HEK293T (cell line): ENCODE measurements at regions of chr6 and their contacts with region 1.

Region 1: DNA sequence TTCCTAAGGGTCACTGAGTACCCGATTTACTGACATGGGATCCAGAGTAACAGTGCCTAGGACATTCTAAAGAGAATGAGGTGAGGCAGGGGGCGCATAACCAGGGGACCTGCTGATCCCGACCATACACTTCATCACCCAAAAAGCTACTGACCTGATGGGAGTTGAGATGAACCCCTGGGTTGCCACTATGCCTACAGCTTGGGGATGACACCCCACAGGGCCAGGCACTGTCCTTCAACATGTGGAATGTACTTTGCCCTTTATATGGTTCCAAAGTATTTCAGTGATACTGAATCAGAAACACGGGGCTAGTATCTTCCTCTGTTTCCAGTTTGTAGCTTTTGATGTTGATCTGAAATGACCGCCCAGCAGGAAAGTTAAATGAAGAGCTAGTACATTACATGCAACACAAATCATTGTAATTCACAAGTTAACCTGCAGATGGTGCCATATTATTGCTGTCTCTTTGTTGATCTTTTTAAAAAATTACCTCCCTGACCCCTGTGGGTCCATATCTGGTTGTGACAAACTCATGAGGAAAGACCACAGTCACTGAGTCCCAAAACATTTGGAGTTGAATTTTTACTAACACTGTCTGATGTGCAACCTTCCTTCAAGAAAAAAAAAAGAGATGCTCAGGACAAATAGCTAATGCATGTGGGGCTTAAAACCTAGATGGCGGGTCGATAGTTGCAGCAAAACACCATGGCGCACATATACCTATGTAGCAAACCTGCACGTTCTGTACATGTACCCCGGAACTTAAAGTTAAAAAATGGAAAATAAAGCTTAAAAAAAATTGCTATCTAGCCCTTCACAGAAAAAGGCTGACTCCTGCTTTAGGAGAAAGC is 42.7 kb upstream of the GCNT2 start:
- DNase-seq: peak; percentile 51

Region 2: GRCh38 chr6:10219510-10219909 is 258.9 kb before region 1 on chr6:
- CTCF ChIA-PET with region 1: no interaction called
- POLR2A ChIA-PET with region 1: no interaction called
- DNase-seq: no peak

Region 3: DNA sequence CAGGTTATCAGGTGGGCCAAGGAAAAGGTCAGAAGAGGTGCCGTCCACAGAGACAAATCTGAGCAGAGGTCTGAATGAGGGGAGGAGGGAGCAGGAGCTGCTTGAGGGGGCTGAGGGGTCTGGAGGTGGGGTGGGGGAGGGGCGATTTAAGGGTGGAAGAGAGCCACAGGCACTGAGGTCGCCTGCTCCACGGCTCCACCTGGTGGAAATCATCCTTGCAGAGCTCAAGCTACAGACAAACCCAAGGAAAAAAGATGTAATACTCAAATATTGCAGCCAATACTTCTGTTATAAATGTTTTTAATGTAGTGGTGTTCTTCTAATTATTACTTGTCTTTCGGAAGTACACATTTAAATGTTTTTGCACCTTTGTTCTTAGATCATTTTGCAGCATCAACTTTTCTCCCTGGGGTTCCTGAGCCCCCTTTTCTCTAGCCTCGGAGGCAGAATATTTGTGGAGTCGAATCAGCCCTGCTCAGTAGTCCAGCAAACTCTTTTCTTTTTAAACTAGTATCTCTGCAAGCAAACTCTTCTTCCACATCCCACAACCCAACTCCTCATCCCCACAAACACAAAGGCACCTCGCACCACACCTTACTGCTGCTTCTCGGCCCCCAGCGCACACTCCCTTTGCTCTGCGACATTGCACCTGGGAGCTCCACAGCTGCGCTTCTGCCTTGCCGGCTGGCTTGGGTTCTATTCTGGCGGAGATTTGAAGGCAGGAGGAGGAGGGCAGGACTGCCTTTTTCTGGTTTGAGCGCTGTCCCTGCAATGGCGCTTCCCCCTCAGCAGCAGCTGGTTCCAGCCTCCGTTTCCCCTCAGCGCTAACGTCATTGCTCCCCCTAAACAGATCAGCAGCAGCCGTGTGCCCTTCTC is 12.5 kb before region 1 on chr6:
- CTCF ChIA-PET with region 1: interaction called, 10 read pairs
- POLR2A ChIA-PET with region 1: no interaction called
- DNase-seq: peak; percentile 66

Region 4: GRCh38 chr6:10800829-10801535 is 322.6 kb after region 1 on chr6:
- CTCF ChIA-PET with region 1: interaction called, 15 read pairs
- POLR2A ChIA-PET with region 1: no interaction called
- DNase-seq: peak; percentile 80

Region 5: GRCh38 chr6:11064836-11065235 is 586.4 kb after region 1 on chr6:
- CTCF ChIA-PET with region 1: interaction called, 10 read pairs
- POLR2A ChIA-PET with region 1: no interaction called
- DNase-seq: no peak